ENCODE measurements at regions of chr2 and their contacts with region 1.

Region 1: GRCh38 chr2:217785544-217786045 is 217.2 kb downstream of the TNS1 start:
- DNase-seq: peak; percentile 60
- ATAC-seq: peak; percentile 92
- H3K4me3 ChIP-seq: no peak overlapping the region
- H3K27ac ChIP-seq: no peak overlapping the region
- H3K4me1 ChIP-seq: peaks cover 3% of the 10 kb centered on the region
- H3K27me3 ChIP-seq: no peaks in the 10 kb centered on the region
- CTCF ChIP-seq: peak; percentile 98
- POLR2A ChIP-seq: 0 out of 2 replicates have a peak, but pooled peaks have one; percentile 32
- RAD21 ChIP-seq: peak; percentile 95

Region 2: GRCh38 chr2:217886720-217887309 is 101.2 kb after region 1 on chr2:
- CTCF ChIA-PET with region 1: interaction called, 16 read pairs
- POLR2A ChIA-PET with region 1: no interaction called
- dilution Hi-C with region 1: no loop called
- in situ Hi-C with region 1: loop called (anchors 5 kb)
- intact Hi-C with region 1: loop called (anchors 1 kb)
- DNase-seq: peak; percentile 73
- ATAC-seq: peak; percentile 57; the same call in 1 of the 2 replicates
- H3K4me3 ChIP-seq: no peak overlapping the region
- H3K27ac ChIP-seq: no peak overlapping the region
- H3K4me1 ChIP-seq: no peaks in the 10 kb centered on the region
- H3K27me3 ChIP-seq: no peaks in the 10 kb centered on the region
- CTCF ChIP-seq: peak; percentile 76
- POLR2A ChIP-seq: no peak
- RAD21 ChIP-seq: peak; percentile 74

Region 3: GRCh38 chr2:218033590-218034496 is 248.2 kb after region 1 on chr2:
- CTCF ChIA-PET with region 1: interaction called, 6 read pairs
- POLR2A ChIA-PET with region 1: no interaction called
- dilution Hi-C with region 1: no loop called
- in situ Hi-C with region 1: loop called (anchors 10 kb)
- intact Hi-C with region 1: loop called (anchors 1 kb)
- DNase-seq: no peak
- ATAC-seq: no peak
- H3K4me3 ChIP-seq: no peak overlapping the region
- H3K27ac ChIP-seq: no peak overlapping the region
- H3K4me1 ChIP-seq: peaks cover 6% of the 10 kb centered on the region; the same call in 1 of the 2 replicates
- H3K27me3 ChIP-seq: peaks cover 40% of the 10 kb centered on the region
- CTCF ChIP-seq: no peak
- POLR2A ChIP-seq: no peak
- RAD21 ChIP-seq: no peak

Region 4: DNA sequence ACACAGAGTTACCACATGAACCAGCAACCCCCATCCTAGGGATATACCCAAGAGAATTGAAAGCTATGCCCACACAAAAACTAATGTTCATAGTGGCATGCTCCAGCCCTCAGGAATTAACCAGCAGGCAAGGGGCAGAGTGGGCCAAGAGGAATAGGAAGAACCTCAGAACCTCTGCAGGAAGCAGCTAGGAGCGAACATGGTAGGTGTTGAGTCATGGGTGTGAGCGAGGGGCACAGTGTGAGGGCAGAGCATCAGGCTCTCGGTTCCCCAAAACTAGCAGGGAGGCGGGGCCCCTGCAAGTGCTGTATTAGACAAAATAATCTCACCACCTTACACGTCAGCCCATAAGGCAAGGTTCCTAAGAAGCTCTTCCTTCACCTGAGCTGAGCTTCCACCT is 277.9 kb after region 1 on chr2:
- CTCF ChIA-PET with region 1: interaction called, 10 read pairs
- POLR2A ChIA-PET with region 1: no interaction called
- dilution Hi-C with region 1: no loop called
- in situ Hi-C with region 1: loop called (anchors 5 kb)
- intact Hi-C with region 1: loop called (anchors 1 kb)
- DNase-seq: no peak
- ATAC-seq: no peak
- H3K4me3 ChIP-seq: no peak overlapping the region
- H3K27ac ChIP-seq: no peak overlapping the region
- H3K4me1 ChIP-seq: no peaks in the 10 kb centered on the region
- H3K27me3 ChIP-seq: peaks cover 74% of the 10 kb centered on the region
- CTCF ChIP-seq: no peak
- POLR2A ChIP-seq: no peak
- RAD21 ChIP-seq: no peak